PC-3 (cell line): ENCODE measurements at regions of chr1 and their contacts with region 1.

Region 1: GRCh38 chr1:111334169-111334568 is 43.5 kb downstream of the CHIA start:
- DNase-seq: peak; percentile 78
- ATAC-seq: peak; percentile 88
- H3K4me3 ChIP-seq: no peak overlapping the region
- H3K27ac ChIP-seq: no peak overlapping the region
- H3K4me1 ChIP-seq: no peaks in the 10 kb centered on the region
- H3K27me3 ChIP-seq: no peaks in the 10 kb centered on the region
- CTCF ChIP-seq: peak; percentile 90

Region 2: GRCh38 chr1:111030590-111030989 is 303.6 kb before region 1 on chr1:
- CTCF ChIA-PET with region 1: interaction called, 3 read pairs
- POLR2A ChIA-PET with region 1: no interaction called
- intact Hi-C with region 1: loop called (anchors 5 kb)
- DNase-seq: peak; percentile 80
- ATAC-seq: peak; percentile 92
- H3K4me3 ChIP-seq: no peak overlapping the region
- H3K27ac ChIP-seq: no peak overlapping the region
- H3K4me1 ChIP-seq: no peaks in the 10 kb centered on the region
- H3K27me3 ChIP-seq: no peaks in the 10 kb centered on the region
- CTCF ChIP-seq: peak; percentile 95

Region 3: DNA sequence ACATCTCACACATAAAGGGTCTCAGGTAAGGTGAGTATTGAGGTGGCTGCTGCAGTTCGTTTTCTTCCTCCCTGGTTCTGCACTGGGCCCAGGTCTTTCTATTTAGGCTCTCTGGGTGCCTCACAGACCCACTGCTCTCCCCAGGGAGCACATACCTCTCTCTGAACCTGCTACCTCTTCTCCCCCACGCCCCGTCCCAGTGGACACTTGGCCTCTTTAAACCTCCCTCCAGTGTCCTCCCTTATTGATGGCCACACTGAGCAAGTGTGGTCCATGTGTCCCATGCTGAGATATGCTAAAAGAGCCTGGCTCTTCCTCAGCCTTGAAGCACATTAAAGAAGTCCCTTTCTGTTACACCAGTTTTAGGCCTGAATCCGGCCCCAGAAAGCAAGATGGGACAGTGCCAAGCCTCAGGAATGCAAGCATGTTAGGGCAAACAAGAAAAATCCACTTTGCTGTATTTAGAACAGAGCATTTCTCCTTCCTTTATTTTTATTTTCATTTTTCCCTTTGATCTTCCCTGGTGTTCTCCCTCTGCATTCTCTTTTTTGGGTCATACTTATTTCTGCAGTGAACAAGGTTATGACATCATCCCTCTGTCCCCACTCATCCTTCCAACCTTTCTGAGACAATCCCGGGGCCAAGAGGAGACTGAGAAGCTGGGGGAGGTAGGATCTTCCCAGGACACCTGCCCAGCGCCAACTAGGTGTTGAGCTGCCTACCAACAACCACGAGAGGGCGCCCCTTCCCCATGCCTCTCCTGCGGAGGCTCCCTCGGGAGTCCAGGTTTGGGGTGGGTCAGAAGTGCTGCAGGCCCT is 111.7 kb before region 1 on chr1:
- CTCF ChIA-PET with region 1: interaction called, 7 read pairs
- POLR2A ChIA-PET with region 1: no interaction called
- intact Hi-C with region 1: loop called (anchors 1 kb)
- DNase-seq: peak; percentile 90
- ATAC-seq: peak; percentile 96
- H3K4me3 ChIP-seq: no peak overlapping the region
- H3K27ac ChIP-seq: no peak overlapping the region
- H3K4me1 ChIP-seq: peaks cover 25% of the 10 kb centered on the region
- H3K27me3 ChIP-seq: no peaks in the 10 kb centered on the region
- CTCF ChIP-seq: peak; percentile 95